Esophagus muscularis mucosa (tissue), 4 donors: ENCODE measurements at regions of chr9 and their contacts with region 1.

Region 1: GRCh38 chr9:35553670-35554543 is 51.2 kb upstream of the TESK1 start:
- DNase-seq: no peak
- H3K4me3 ChIP-seq: peak overlapping the region in 1 of 4 donors; percentile 3
- H3K27ac ChIP-seq: peak overlapping the region; percentile 70 to 84 (median 76)
- H3K4me1 ChIP-seq: peaks cover 18 to 53% (median 49%) of the 10 kb centered on the region in 4 donors
- H3K27me3 ChIP-seq: no peaks in the 10 kb centered on the region
- CTCF ChIP-seq: peak; percentile 90 to 96 (median 91)
- EP300 ChIP-seq: no peak
- POLR2A ChIP-seq: no peak

Region 2: GRCh38 chr9:35489313-35490154 is 64.4 kb before region 1 on chr9 and contains the start of gene RUSC2:
- intact Hi-C with region 1: loop called (anchors 2 kb)
- DNase-seq: peak; percentile 94
- H3K4me3 ChIP-seq: peak within 1 kb of the TSS; percentile 72 to 94 (median 86)
- H3K27ac ChIP-seq: peak within 1 kb of the TSS; percentile 97 to 99 (median 98)
- H3K4me1 ChIP-seq: peaks cover 24 to 42% (median 33%) of the 10 kb centered on the region in 4 donors
- H3K27me3 ChIP-seq: no peaks in the 10 kb centered on the region
- CTCF ChIP-seq: peak; percentile 57 to 58 (median 57)
- EP300 ChIP-seq: no peak
- POLR2A ChIP-seq: peak; percentile 49
- total RNA-seq, gene RUSC2: 48.0 to 91.2 (median 73.8) TPM

Region 3: DNA sequence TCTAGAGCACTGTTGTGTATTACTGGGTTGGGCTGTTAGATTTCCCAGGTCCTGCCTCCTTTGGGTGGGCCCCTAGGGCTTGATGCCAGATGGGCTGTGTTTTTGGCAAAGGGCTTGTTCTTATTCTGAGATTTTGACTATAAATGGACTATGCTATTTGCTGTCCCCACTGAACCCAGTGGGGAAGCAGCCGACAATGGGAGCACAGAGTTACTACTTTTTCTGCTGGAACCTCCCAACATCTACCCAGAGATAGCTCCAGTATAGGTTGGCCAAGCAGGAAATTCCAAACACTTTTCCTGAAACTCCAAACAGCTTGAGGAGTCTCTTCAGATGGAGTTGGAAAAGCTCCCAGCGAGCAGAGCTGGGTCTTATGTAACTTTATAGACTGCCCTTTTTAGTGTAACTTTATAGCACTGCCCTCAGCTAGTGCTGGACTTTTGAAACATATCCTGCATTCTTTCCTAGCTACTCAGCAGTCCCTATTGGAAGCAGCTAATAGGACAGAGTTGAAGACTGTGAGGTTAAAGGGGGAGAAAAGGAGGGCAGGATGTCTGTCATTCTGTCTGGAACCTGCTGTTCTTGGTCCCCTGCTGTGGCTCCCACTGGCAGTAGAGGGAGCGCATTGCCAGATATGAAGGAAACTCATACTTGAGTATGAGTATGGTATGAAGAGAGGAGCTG is 43.0 kb before region 1 on chr9:
- intact Hi-C with region 1: no loop called
- DNase-seq: no peak
- H3K4me3 ChIP-seq: peak overlapping the region; percentile 3 to 21 (median 14)
- H3K27ac ChIP-seq: peak overlapping the region; percentile 82 to 91 (median 85)
- H3K4me1 ChIP-seq: peaks cover 38 to 86% (median 78%) of the 10 kb centered on the region in 4 donors
- H3K27me3 ChIP-seq: no peaks in the 10 kb centered on the region
- CTCF ChIP-seq: peak; percentile 41 to 55 (median 49)
- EP300 ChIP-seq: peak; percentile 33
- POLR2A ChIP-seq: no peak

Region 4: GRCh38 chr9:35675732-35676392 is 122.0 kb after region 1 on chr9:
- intact Hi-C with region 1: no loop called
- DNase-seq: no peak
- H3K4me3 ChIP-seq: peak overlapping the region; percentile 56 to 67 (median 58)
- H3K27ac ChIP-seq: peak overlapping the region in 3 of 4 donors; percentile 10 to 69 (median 21)
- H3K4me1 ChIP-seq: peaks cover 21 to 40% (median 35%) of the 10 kb centered on the region in 4 donors
- H3K27me3 ChIP-seq: no peaks in the 10 kb centered on the region
- CTCF ChIP-seq: peak in 1 of 3 experiments; percentile 5
- EP300 ChIP-seq: no peak
- POLR2A ChIP-seq: no peak